SK-N-SH (cell line): ENCODE measurements at regions of chr1 and their contacts with region 1.

Region 1: DNA sequence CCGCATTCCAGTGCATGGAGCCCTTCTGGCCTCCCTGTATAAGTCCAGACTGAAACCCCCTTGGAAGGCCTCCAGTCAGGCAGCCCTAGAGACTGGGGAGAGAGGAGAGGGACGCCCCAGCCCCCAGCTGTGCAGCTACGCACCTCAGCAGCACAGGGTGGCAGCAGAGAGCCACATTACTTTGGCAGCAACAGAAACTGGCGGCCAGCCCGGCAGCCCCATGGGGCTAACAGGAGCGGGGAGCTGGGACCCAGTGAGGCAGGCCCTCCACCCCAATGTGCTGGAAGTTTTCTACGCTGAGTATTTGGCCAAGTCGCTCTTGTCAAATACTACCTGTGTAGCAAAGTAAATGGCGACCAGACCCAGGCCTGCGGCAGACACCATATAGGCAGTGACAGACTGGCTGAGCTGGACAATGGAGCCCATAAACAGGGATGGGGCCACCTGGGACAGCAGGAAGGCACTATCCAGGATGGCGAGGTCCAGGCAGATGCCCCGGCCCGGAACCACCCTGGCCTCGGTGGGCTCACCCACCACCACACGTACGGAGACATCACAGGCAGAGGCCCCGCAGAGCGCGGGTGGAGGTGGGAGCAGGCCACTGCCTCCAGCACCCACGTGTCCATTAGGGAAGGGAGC is 21.2 kb downstream of the SLC45A3 start:
- DNase-seq: peak; percentile 93
- H3K4me3 ChIP-seq: no peak overlapping the region; a peak in 1 of 4 replicates
- H3K27ac ChIP-seq: no peak overlapping the region
- H3K4me1 ChIP-seq: peaks cover 0 to 4% of the 10 kb centered on the region in 2 experiments; a peak in 1 of 4 replicates
- H3K27me3 ChIP-seq: no peaks in the 10 kb centered on the region
- CTCF ChIP-seq: peak; percentile 88
- EP300 ChIP-seq: no peak
- RAD21 ChIP-seq: peak; percentile 91

Region 2: DNA sequence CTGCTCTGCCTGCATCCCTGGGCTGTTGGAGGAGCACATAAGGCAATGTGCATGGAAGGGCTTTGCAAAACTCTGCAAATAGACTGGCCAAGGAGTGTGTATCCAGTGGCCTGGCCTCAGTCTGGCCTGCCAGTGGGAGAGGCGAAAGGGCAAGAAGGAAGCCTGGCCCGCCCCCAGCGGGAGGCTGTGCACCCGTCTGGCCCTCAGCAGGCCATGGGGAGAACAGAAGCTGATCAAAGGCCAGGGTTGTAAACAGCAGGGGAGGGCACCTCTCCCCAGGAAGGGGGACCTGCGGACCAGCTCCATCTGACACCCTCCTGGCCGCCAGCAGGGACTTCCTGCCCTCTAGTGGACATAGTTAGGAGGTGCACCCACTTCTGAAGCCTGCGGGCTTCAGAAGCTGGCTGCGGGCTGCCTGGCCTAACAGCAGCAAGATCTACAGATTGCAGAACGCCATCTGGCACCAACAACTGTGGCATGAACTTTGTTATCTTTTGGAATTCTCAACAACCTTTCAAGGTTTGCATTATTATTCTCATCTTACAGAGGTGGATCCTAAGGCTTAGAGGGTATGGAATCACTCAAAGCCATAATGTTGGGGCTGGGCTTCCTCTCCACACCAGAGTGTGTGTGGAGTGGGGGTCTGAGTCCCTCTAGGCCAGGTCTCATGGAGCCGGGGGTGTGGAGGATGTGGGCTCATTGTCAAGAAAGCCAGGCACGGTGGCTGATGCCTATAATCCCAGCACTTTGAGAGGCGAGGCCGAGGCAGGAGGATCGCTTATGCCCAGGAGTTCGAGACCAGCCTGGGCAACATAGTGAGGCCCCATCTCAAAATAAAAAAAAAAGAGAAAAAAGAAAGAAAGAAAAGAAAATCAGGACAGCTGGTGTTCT is 173.5 kb before region 1 on chr1:
- CTCF ChIA-PET with region 1: interaction called, 94 read pairs
- POLR2A ChIA-PET with region 1: no interaction called
- DNase-seq: peak; percentile 92
- H3K4me3 ChIP-seq: peak overlapping the region in 1 of 2 experiments; percentile 22; a peak in 1 of 4 replicates
- H3K27ac ChIP-seq: no peak overlapping the region
- H3K4me1 ChIP-seq: peaks cover 0 to 3% of the 10 kb centered on the region in 2 experiments; a peak in 2 of 4 replicates
- H3K27me3 ChIP-seq: peaks cover 16% of the 10 kb centered on the region; the same call in 1 of the 2 replicates
- CTCF ChIP-seq: peak; percentile 93
- EP300 ChIP-seq: no peak; a peak in 1 of 4 replicates
- RAD21 ChIP-seq: peak; percentile 91

Region 3: DNA sequence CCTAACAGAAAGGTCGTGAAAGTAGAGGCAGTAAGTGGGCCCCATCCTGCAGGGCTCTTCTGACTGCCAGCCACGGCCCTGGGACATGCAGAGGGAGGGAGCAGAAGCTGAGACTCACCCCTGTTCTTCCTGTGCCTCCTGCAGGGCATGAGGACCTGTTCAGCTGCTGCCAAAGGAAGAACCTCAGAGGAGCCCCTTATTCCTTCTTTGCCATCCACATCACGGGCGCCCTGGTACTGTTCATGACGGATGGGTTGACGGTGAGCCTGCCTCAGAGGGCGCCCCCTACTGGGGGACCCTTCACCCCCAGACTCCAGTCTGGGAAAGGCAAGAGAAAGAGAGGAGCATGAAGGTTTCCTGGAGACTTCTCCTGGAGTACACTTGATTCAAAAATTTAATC is 74.3 kb before region 1 on chr1:
- CTCF ChIA-PET with region 1: interaction called, 443 read pairs
- POLR2A ChIA-PET with region 1: no interaction called
- DNase-seq: no peak
- H3K4me3 ChIP-seq: no peak overlapping the region
- H3K27ac ChIP-seq: no peak overlapping the region
- H3K4me1 ChIP-seq: peaks cover 0 to 14% of the 10 kb centered on the region in 2 experiments; a peak in 2 of 4 replicates
- H3K27me3 ChIP-seq: no peaks in the 10 kb centered on the region; the same call in 1 of the 2 replicates
- CTCF ChIP-seq: peak; percentile 56
- EP300 ChIP-seq: no peak
- RAD21 ChIP-seq: no peak

Region 4: GRCh38 chr1:205645519-205645918 is 13.5 kb before region 1 on chr1:
- CTCF ChIA-PET with region 1: interaction called, 67 read pairs
- POLR2A ChIA-PET with region 1: interaction called, 3 read pairs
- DNase-seq: no peak
- H3K4me3 ChIP-seq: no peak overlapping the region
- H3K27ac ChIP-seq: no peak overlapping the region
- H3K4me1 ChIP-seq: no peaks in the 10 kb centered on the region; a peak in 1 of 4 replicates
- H3K27me3 ChIP-seq: no peaks in the 10 kb centered on the region
- CTCF ChIP-seq: no peak
- EP300 ChIP-seq: no peak
- RAD21 ChIP-seq: no peak

Region 5: GRCh38 chr1:205719762-205720161 is 60.7 kb after region 1 on chr1:
- CTCF ChIA-PET with region 1: interaction called, 367 read pairs
- POLR2A ChIA-PET with region 1: no interaction called
- DNase-seq: no peak
- H3K4me3 ChIP-seq: no peak overlapping the region
- H3K27ac ChIP-seq: no peak overlapping the region
- H3K4me1 ChIP-seq: no peaks in the 10 kb centered on the region
- H3K27me3 ChIP-seq: no peaks in the 10 kb centered on the region
- CTCF ChIP-seq: no peak
- EP300 ChIP-seq: no peak
- RAD21 ChIP-seq: no peak

Region 6: DNA sequence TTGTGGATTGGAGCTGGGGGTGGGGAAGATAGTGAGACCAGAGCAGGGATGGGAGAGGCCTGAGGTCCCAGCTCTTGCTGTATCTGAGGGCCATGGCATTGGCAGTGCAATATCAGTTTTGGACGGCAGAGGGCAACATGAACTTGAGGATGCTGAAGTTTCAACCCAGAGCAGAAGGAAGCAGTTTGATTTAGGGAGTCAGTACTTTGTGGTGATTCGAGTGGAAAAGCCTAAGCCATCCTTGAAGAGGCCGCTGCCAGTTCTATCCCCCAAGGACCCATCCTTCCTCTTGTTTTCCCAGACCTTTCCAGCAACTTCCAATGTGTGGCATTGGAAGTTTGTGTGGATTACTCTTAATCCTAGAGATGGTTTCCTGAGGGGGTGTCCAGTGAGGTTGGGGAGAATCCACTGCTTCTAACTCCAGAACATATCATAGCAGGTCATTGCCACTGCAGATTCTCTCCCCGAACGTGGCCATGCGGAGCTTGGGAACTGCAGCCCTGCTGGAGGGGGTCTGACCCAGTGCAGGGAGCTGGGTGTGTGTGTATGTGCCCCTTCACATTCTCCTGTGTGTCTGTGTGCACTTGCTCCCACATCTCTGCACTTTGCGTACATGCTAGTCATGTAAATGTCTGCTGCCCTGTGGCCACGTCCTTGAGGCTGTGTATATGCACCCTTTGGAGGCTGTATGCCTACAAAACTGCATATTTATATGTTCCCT is 260.1 kb after region 1 on chr1:
- CTCF ChIA-PET with region 1: interaction called, 19 read pairs
- POLR2A ChIA-PET with region 1: no interaction called
- DNase-seq: peak; percentile 79
- H3K4me3 ChIP-seq: no peak overlapping the region; a peak in 1 of 4 replicates
- H3K27ac ChIP-seq: no peak overlapping the region
- H3K4me1 ChIP-seq: peaks cover 0 to 7% of the 10 kb centered on the region in 2 experiments; a peak in 1 of 4 replicates
- H3K27me3 ChIP-seq: no peaks in the 10 kb centered on the region
- CTCF ChIP-seq: peak; percentile 81
- EP300 ChIP-seq: no peak
- RAD21 ChIP-seq: peak; percentile 92